Head of caudate nucleus (tissue), 42 donors: ENCODE measurements at regions of chr5 and their contacts with region 1.

Region 1: GRCh38 chr5:72366324-72366976 is 46.3 kb downstream of the PTCD2 start:
- DNase-seq: peak in 39 of 42 donors; percentile 25 to 86 (median 63)

Region 2: DNA sequence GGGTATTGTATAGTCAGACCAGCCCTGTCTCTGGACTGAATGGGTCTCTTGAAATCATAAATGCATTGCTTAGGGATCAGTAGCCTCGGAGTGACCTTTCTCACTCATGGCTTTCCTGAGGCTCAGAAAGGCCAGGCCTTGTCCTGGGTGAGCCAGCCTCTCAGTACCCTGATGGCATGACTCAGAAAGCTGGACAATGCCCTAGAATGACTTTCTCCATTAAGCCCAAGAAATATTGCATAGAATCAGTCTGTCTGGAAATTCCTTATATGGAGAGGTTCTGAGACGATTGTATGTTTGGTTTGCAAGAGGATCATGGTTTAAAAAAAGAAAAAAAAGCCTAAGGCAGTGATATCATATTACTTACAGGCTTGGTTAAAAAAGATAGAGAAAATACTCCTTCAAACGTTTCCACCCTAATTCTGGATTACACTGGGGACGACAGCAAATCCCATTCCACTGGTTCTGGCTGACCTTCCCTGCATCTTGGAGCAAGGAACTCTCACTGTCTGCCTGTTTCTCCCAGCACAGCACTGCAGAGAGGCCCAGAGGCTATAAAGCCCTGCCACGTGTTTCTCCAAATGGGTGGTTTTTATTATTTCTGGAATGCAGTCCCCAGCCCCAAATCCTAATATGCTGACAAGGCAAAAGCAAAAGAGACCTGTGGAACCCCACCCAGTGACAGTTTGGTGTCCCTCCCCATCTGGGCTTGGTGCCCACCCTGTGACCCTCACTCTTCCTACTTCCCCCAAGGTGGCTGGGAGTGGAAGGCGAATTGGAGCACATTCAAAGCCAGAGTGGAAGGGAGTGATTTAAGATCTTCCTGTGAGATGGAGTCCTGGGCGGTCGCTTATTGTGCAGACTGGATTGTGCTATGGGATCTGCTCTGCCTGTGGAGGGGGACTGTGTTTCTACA is 224.8 kb before region 1 on chr5:
- intact Hi-C with region 1: no loop called
- DNase-seq: no peak

Region 3: GRCh38 chr5:72523960-72524582 is 157.6 kb after region 1 on chr5:
- intact Hi-C with region 1: loop called (anchors 5 kb)
- DNase-seq: peak in 2 of 42 donors; percentile 22 to 44

Region 4: DNA sequence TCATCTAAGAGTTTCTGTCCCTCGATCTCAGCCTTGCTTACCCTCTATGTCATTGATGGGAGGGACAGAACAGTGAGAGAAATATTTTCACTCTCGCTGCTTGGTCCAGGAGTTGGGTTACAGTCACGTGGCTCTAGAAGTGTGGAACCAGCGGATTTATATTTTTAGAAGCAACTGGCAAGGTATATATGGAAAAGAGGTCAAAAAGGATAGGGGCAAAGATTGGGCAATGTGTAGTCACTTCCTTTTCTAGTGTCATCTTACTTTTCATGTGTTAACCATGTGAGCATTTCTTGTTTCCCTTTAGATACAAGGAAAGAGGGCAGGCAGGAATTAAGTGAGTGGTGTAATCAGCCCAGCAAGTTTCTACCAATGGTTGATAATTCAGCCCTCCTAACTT is 252.3 kb after region 1 on chr5:
- intact Hi-C with region 1: no loop called
- DNase-seq: no peak

Region 5: GRCh38 chr5:72822944-72823343 is 456.5 kb after region 1 on chr5:
- intact Hi-C with region 1: loop called (anchors 10 kb)
- DNase-seq: no peak

Region 6: DNA sequence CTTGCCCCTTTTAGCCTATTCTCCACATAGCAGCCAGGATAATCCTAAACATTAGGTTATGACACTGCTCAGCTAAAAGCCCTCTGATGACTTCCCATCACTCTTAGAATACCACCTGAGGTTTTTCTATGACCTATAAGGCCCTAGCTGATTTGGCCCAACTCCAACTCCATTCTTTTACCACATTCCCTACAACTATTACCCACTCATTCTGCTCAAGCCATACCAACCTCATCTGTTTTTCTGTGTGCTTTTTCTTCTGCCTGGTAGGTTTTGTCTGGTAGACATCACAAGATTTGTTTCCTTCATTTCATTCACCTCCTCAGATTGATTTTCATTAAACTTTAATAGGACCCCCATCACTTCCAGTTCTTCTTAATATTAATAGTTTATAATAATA is 576.9 kb after region 1 on chr5:
- intact Hi-C with region 1: loop called (anchors 5 kb)
- DNase-seq: no peak